ENCODE measurements at regions of chr5 and their contacts with region 1.

Region 1: DNA sequence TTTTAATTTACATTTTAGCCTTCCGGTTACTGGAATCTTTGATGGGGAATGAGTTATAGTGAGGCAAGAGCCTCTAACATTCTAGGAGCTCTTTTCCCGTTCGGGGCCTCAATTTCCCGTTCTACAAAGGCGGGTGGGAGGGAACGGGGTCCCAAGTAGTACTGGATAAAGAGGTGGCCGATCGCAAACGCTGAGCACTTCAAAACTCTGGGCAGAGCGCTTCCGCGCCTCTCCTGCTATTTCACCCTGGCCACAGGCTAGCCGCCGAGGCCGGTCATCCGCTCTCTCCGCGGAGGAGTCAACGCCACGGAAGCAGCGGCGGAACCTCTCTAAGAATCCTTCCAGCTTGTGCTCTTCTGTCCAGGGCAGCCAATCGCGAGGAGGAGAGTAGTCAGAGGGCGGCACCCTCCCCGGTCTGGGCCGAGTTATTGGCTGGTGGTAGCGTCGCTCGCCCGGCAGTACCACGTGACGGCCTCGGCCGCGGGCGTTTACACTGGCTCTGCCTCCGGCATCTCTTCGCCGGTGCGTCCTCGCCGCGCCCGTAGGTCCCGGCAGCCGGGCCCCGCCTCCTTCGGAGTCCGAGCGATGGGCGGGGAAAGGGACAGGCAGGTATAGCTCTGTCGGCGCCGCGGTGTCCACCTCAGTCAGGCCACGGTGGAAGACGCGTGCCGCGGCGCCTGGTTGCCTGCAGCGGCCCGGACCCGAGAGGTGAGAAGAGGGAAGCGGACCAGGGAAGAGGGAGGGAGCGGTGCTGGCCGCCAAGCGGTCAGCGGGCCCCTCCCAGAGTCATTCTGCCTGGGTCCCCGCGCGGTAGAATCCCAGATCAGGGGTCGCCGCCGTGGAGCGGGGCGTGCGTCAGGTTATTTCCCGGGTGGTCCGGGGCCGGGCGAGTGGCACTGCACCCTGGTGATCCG is at the start of gene SLC26A2:
- DNase-seq: peak; percentile 96 to 98
- ATAC-seq: peak; percentile 89 to 94
- H3K4me3 ChIP-seq: peak within 1 kb of the TSS; percentile 81
- H3K27ac ChIP-seq: peak within 1 kb of the TSS; percentile 91 to 96
- H3K4me1 ChIP-seq: peaks cover 48% of the 10 kb centered on the region
- CTCF ChIP-seq: no peak
- EP300 ChIP-seq: no peak
- POLR2A ChIP-seq: peak; percentile 96
- RAD21 ChIP-seq: no peak
- polyA plus RNA-seq, gene SLC26A2: 23.2 and 31.9 TPM in 2 replicates

Region 2: GRCh38 chr5:149636851-149637246 is 323.7 kb before region 1 on chr5:
- CTCF ChIA-PET with region 1: interaction called, 14 read pairs
- POLR2A ChIA-PET with region 1: interaction called, 3 read pairs
- DNase-seq: peak; percentile 70 to 72
- ATAC-seq: peak; percentile 79 to 93
- H3K4me3 ChIP-seq: no peak overlapping the region
- H3K27ac ChIP-seq: no peak overlapping the region
- H3K4me1 ChIP-seq: peaks cover 10% of the 10 kb centered on the region; the same call in 2 of the 3 replicates
- CTCF ChIP-seq: peak; percentile 92
- EP300 ChIP-seq: no peak
- POLR2A ChIP-seq: no peak
- RAD21 ChIP-seq: peak; percentile 95 to 96

Region 3: GRCh38 chr5:149834246-149834855 is 126.2 kb before region 1 on chr5:
- CTCF ChIA-PET with region 1: interaction called, 594 read pairs
- POLR2A ChIA-PET with region 1: interaction called, 30 read pairs
- DNase-seq: peak; percentile 87 to 90
- ATAC-seq: peak; percentile 67 to 77
- H3K4me3 ChIP-seq: no peak overlapping the region
- H3K27ac ChIP-seq: no peak overlapping the region
- H3K4me1 ChIP-seq: peaks cover 16% of the 10 kb centered on the region
- CTCF ChIP-seq: peak; percentile 91
- EP300 ChIP-seq: no peak
- POLR2A ChIP-seq: no peak
- RAD21 ChIP-seq: peak; percentile 83 to 90

Region 4: DNA sequence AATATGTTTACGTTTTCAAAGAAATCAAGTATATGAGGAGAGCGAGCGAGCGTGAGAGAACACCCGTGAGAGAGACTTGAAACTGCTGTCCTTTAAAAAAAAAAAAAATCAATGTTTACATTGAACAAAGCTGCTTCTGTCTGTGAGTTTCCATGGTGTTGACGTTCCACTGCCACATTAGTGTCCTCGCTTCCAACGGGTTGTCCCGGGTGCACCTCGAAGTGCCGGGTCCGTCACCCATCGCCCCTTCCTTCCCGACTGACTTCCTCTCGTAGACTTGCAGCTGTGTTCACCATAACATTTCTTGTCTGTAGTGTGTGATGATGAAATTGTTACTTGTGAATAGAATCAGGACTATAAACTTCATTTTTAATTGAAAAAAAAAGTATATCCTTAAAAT is 112.9 kb before region 1 on chr5:
- CTCF ChIA-PET with region 1: interaction called, 331 read pairs
- POLR2A ChIA-PET with region 1: interaction called, 9 read pairs
- DNase-seq: no peak
- ATAC-seq: no peak
- H3K4me3 ChIP-seq: no peak overlapping the region
- H3K27ac ChIP-seq: no peak overlapping the region
- H3K4me1 ChIP-seq: no peaks in the 10 kb centered on the region
- CTCF ChIP-seq: no peak
- EP300 ChIP-seq: no peak
- POLR2A ChIP-seq: no peak
- RAD21 ChIP-seq: no peak

Region 5: DNA sequence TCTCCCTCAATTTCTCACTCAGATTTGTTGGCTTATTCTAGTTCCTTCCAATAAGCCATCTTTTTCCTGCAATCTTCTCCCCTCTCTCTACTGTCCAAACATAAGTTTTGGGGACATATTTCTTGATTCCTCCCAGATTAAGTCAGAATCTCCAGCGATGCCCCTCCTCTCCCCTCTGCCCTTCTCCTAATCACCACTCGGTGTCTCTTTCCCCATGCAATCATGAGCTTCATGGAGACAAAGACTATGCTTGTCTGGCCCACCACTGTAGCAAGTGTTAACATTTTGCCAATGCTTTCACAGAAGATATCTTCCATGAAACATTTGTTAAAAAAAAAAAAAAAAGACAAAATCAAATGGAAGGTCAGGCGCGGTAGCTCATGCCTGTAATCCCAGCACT is 58.4 kb before region 1 on chr5:
- CTCF ChIA-PET with region 1: interaction called, 10 read pairs
- POLR2A ChIA-PET with region 1: interaction called, 6 read pairs
- DNase-seq: peak in 1 of 2 experiments; percentile 21
- ATAC-seq: peak in 1 of 2 experiments; percentile 76; a peak in 3 of 6 replicates
- H3K4me3 ChIP-seq: no peak overlapping the region
- H3K27ac ChIP-seq: no peak overlapping the region
- H3K4me1 ChIP-seq: 0 out of 3 replicates have a peak, but pooled peaks cover 7% of the 10 kb centered on the region
- CTCF ChIP-seq: no peak
- EP300 ChIP-seq: no peak
- POLR2A ChIP-seq: no peak
- RAD21 ChIP-seq: peak in 1 of 2 experiments; percentile 51; a peak in 3 of 5 replicates

Region 6: GRCh38 chr5:149938791-149939358 is 21.7 kb before region 1 on chr5:
- CTCF ChIA-PET with region 1: interaction called, 386 read pairs
- POLR2A ChIA-PET with region 1: interaction called, 61 read pairs
- DNase-seq: peak; percentile 88 to 94
- ATAC-seq: peak; percentile 90 to 92
- H3K4me3 ChIP-seq: no peak overlapping the region
- H3K27ac ChIP-seq: peak overlapping the region; percentile 85 to 91
- H3K4me1 ChIP-seq: peaks cover 71% of the 10 kb centered on the region
- CTCF ChIP-seq: no peak
- EP300 ChIP-seq: peak; percentile 83 to 93
- POLR2A ChIP-seq: no peak
- RAD21 ChIP-seq: peak in 1 of 2 experiments; percentile 30; a peak in 1 of 5 replicates

Region 7: GRCh38 chr5:150101023-150101422 is 140.5 kb after region 1 on chr5:
- CTCF ChIA-PET with region 1: no interaction called
- POLR2A ChIA-PET with region 1: no interaction called
- DNase-seq: no peak
- ATAC-seq: peak; percentile 52 to 62; a peak in 4 of 6 replicates
- H3K4me3 ChIP-seq: no peak overlapping the region
- H3K27ac ChIP-seq: no peak overlapping the region
- H3K4me1 ChIP-seq: no peaks in the 10 kb centered on the region
- CTCF ChIP-seq: no peak
- EP300 ChIP-seq: no peak
- POLR2A ChIP-seq: no peak
- RAD21 ChIP-seq: no peak

Region 8: GRCh38 chr5:150778517-150779396 is 818.2 kb after region 1 on chr5 and contains the start of gene SMIM3:
- CTCF ChIA-PET with region 1: no interaction called
- POLR2A ChIA-PET with region 1: no interaction called
- DNase-seq: peak; percentile 55 to 58
- ATAC-seq: peak; percentile 91 to 94
- H3K4me3 ChIP-seq: peak within 1 kb of the TSS; percentile 81
- H3K27ac ChIP-seq: peak within 1 kb of the TSS; percentile 78 to 86
- H3K4me1 ChIP-seq: peaks cover 9% of the 10 kb centered on the region
- CTCF ChIP-seq: peak; percentile 54
- EP300 ChIP-seq: no peak
- POLR2A ChIP-seq: peak; percentile 33; the same call in 1 of the 2 replicates
- RAD21 ChIP-seq: peak; percentile 64 to 66
- polyA plus RNA-seq, gene SMIM3: 4.5 and 4.9 TPM in 2 replicates